ENCODE measurements at regions of chr13 and their contacts with region 1.

Region 1: GRCh38 chr13:33125821-33126570 is 109.8 kb downstream of the KL start:
- DNase-seq: peak; percentile 94
- H3K4me3 ChIP-seq: no peak overlapping the region
- H3K27ac ChIP-seq: peak overlapping the region; percentile 93
- H3K4me1 ChIP-seq: peaks cover 51% of the 10 kb centered on the region
- H3K27me3 ChIP-seq: no peaks in the 10 kb centered on the region
- CTCF ChIP-seq: no peak
- POLR2A ChIP-seq: peak; percentile 48

Region 2: DNA sequence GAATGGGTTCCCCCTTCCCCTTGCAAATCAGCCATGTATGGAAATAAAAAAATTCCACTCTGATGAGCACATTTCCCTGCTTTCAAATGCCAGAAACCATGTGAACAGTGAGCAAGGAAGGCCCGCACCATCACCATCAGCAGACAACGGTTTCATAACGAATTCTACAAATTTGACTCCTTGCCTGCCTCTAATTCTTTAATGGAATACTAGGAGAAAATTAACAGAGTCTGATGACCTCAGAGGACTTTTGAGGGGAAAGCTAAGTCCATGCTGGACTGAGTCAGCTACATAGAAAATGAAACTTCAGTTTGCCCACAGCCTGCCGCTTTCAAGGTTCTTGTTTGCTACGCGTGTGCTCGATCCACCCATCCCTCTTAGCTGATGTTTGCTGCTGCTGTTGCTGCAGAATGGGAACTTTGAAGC is 156.5 kb before region 1 on chr13:
- CTCF ChIA-PET with region 1: no interaction called
- POLR2A ChIA-PET with region 1: interaction called, 10 read pairs
- dilution Hi-C with region 1: no loop called
- intact Hi-C with region 1: no loop called
- DNase-seq: peak; percentile 81
- H3K4me3 ChIP-seq: peak overlapping the region; percentile 5 to 59 (median 28)
- H3K27ac ChIP-seq: peak overlapping the region; percentile 49
- H3K4me1 ChIP-seq: peaks cover 16% of the 10 kb centered on the region
- H3K27me3 ChIP-seq: peaks cover 3 to 4% of the 10 kb centered on the region in 2 experiments
- CTCF ChIP-seq: no peak
- POLR2A ChIP-seq: no peak

Region 3: GRCh38 chr13:33090755-33091414 is 35.1 kb before region 1 on chr13:
- CTCF ChIA-PET with region 1: interaction called, 7 read pairs
- POLR2A ChIA-PET with region 1: no interaction called
- dilution Hi-C with region 1: no loop called
- intact Hi-C with region 1: loop called (anchors 1 kb)
- DNase-seq: peak; percentile 83
- H3K4me3 ChIP-seq: no peak overlapping the region
- H3K27ac ChIP-seq: peak overlapping the region; percentile 53
- H3K4me1 ChIP-seq: peaks cover 42% of the 10 kb centered on the region
- H3K27me3 ChIP-seq: no peaks in the 10 kb centered on the region
- CTCF ChIP-seq: no peak
- POLR2A ChIP-seq: no peak

Region 4: DNA sequence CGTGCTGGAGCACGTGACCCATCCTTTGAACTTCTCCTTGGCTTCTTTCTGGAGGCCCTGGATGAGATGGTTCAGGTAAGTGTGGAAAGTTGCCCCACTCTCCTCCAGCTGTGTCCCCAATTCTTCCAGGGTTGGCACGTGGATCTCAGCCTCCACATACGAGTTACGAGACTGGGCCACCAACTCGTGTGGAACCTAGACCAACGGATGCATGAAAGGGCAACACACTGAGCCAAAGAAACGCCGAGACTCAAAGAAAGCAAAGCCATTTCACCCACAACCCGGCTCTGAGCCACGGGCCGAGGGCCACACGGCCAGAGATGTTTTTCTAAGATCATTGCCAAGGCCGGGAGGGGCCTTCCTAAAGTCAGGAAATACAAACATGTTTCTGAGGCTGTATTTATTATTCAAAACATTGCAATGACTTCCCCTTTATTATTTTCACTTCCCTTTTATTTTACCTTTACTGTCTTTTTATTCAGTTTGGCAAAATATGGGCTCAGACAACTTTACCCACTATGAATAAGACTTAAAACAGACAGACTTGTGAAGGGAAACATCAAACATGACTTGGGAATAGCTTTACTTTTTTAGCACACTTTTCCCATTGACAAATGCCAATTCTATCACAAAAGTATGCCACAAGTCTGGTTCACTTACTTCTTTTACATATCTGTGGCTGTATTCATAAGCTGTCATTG is 15.1 kb before region 1 on chr13:
- CTCF ChIA-PET with region 1: interaction called, 6 read pairs
- POLR2A ChIA-PET with region 1: no interaction called
- dilution Hi-C with region 1: no loop called
- intact Hi-C with region 1: loop called (anchors 2 kb)
- DNase-seq: peak; percentile 74
- H3K4me3 ChIP-seq: no peak overlapping the region
- H3K27ac ChIP-seq: peak overlapping the region; percentile 38
- H3K4me1 ChIP-seq: peaks cover 21% of the 10 kb centered on the region
- H3K27me3 ChIP-seq: no peaks in the 10 kb centered on the region
- CTCF ChIP-seq: no peak
- POLR2A ChIP-seq: no peak

Region 5: GRCh38 chr13:33188093-33188882 is 62.3 kb after region 1 on chr13:
- CTCF ChIA-PET with region 1: interaction called, 3 read pairs
- POLR2A ChIA-PET with region 1: no interaction called
- dilution Hi-C with region 1: no loop called
- intact Hi-C with region 1: loop called (anchors 1 kb)
- DNase-seq: peak; percentile 45
- H3K4me3 ChIP-seq: no peak overlapping the region
- H3K27ac ChIP-seq: peak overlapping the region; percentile 84
- H3K4me1 ChIP-seq: peaks cover 50% of the 10 kb centered on the region
- H3K27me3 ChIP-seq: no peaks in the 10 kb centered on the region
- CTCF ChIP-seq: no peak
- POLR2A ChIP-seq: no peak

Region 6: DNA sequence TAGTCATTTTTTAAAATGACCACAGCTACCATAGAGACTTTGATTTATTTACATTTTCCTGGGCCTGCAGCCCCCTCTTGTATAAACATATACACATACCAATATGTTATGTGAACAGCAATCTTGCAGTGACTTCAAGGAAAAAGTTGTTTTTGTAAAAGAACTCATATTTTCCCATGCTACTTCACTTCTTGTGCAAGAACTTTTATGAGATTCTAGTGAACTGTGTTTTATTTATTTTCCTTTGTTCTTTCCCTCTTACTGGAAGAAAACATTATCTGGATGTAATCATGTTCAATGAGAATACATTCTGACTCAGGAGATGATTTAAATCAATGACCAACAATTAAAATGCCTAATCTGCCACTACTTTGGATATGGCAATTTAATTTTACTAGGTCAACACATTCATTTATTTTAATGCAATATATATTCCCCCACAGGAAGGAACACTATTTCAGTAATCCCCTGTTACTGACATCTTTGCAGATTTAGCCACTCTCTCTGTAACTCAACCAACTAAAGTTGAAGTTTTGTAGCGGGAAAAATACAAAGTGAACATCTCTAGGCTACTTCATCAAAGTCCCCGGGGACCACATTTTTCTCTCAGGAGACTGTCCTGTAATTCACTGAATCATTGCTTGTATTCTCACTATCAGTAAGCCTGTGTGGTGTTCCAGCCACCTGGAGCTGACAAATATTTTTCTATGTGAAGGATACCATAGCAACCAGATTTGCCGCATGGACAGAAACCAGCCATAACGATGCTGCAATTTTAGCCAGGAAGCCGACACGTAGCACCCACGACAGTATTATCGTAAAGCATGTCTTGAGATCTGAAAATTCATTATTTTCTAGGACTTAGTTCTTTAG is 69.1 kb after region 1 on chr13:
- CTCF ChIA-PET with region 1: interaction called, 3 read pairs
- POLR2A ChIA-PET with region 1: no interaction called
- dilution Hi-C with region 1: no loop called
- intact Hi-C with region 1: loop called (anchors 2 kb)
- DNase-seq: peak; percentile 86
- H3K4me3 ChIP-seq: no peak overlapping the region
- H3K27ac ChIP-seq: peak overlapping the region; percentile 87
- H3K4me1 ChIP-seq: peaks cover 39% of the 10 kb centered on the region
- H3K27me3 ChIP-seq: no peaks in the 10 kb centered on the region
- CTCF ChIP-seq: no peak
- POLR2A ChIP-seq: no peak

Region 7: GRCh38 chr13:33218001-33218400 is 92.0 kb after region 1 on chr13:
- CTCF ChIA-PET with region 1: no interaction called
- POLR2A ChIA-PET with region 1: no interaction called
- dilution Hi-C with region 1: no loop called
- intact Hi-C with region 1: no loop called
- DNase-seq: no peak
- H3K4me3 ChIP-seq: no peak overlapping the region
- H3K27ac ChIP-seq: no peak overlapping the region
- H3K4me1 ChIP-seq: no peaks in the 10 kb centered on the region
- H3K27me3 ChIP-seq: no peaks in the 10 kb centered on the region
- CTCF ChIP-seq: no peak
- POLR2A ChIP-seq: no peak